MCF 10A (cell line): ENCODE measurements at regions of chr7 and their contacts with region 1.

Region 1: GRCh38 chr7:135801045-135801693 is 52.6 kb upstream of the FAM180A start:
- DNase-seq: peak; percentile 71
- H3K4me3 Mint-ChIP-seq: no peak overlapping the region
- H3K27ac Mint-ChIP-seq: no peak overlapping the region
- H3K4me1 Mint-ChIP-seq: peaks cover 15% of the 10 kb centered on the region
- H3K27me3 Mint-ChIP-seq: no peaks in the 10 kb centered on the region
- CTCF ChIP-seq: peak; percentile 76

Region 2: GRCh38 chr7:135620980-135621850 is 180.0 kb before region 1 on chr7:
- CTCF ChIA-PET with region 1: interaction called, 9 read pairs
- POLR2A ChIA-PET with region 1: no interaction called
- intact Hi-C with region 1: loop called (anchors 2 kb)
- DNase-seq: peak; percentile 76
- H3K4me3 Mint-ChIP-seq: no peak overlapping the region
- H3K27ac Mint-ChIP-seq: no peak overlapping the region
- H3K4me1 Mint-ChIP-seq: peaks cover 6% of the 10 kb centered on the region
- H3K27me3 Mint-ChIP-seq: no peaks in the 10 kb centered on the region
- CTCF ChIP-seq: peak; percentile 77

Region 3: DNA sequence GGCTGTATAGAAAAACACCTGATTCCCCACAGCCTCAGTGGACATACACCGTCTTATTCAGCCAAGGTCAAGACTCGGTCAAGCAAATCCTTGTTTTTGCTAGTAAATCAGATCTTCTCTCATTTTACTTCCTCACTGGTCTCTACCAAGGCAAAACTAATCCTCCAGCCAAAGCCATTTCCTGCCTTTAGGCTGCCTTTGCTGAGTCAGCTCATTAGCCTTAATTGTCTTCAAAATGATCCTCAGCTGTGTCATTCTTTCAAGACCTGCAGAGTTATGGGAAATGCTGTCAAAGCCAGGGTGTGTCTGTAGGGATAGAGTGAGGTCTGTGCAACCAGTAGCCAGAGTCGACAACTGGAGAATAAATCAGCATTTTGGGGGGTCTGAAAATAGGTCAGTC is 54.7 kb after region 1 on chr7:
- CTCF ChIA-PET with region 1: interaction called, 10 read pairs
- POLR2A ChIA-PET with region 1: no interaction called
- intact Hi-C with region 1: no loop called
- DNase-seq: peak; percentile 38
- H3K4me3 Mint-ChIP-seq: no peak overlapping the region
- H3K27ac Mint-ChIP-seq: no peak overlapping the region
- H3K4me1 Mint-ChIP-seq: no peaks in the 10 kb centered on the region
- H3K27me3 Mint-ChIP-seq: no peaks in the 10 kb centered on the region
- CTCF ChIP-seq: no peak

Region 4: DNA sequence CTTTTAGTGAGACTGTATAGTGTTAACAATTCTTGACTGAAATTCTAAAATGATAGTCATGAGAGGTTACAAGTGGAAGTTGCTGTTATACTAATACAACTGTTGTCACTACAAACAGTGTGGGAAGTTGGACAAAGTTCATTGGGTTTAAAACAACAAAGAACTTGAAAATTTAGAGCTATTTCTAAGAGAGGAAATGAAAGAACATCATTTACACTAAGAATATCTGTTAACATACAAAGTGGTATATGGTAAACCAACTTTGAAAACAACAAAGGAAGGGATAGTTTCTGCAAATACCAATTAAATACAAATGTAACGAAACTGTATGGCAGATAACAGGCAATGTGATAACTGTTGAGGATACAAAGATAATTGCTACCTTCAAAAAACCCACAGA is 164.4 kb after region 1 on chr7:
- CTCF ChIA-PET with region 1: no interaction called
- POLR2A ChIA-PET with region 1: no interaction called
- intact Hi-C with region 1: no loop called
- DNase-seq: no peak
- H3K4me3 Mint-ChIP-seq: no peak overlapping the region
- H3K27ac Mint-ChIP-seq: no peak overlapping the region
- H3K4me1 Mint-ChIP-seq: peaks cover 25% of the 10 kb centered on the region
- H3K27me3 Mint-ChIP-seq: no peaks in the 10 kb centered on the region
- CTCF ChIP-seq: no peak

Region 5: GRCh38 chr7:136009488-136010079 is 208.4 kb after region 1 on chr7:
- CTCF ChIA-PET with region 1: interaction called, 183 read pairs
- POLR2A ChIA-PET with region 1: interaction called, 4 read pairs
- intact Hi-C with region 1: loop called (anchors 1 kb)
- DNase-seq: peak; percentile 59
- H3K4me3 Mint-ChIP-seq: no peak overlapping the region
- H3K27ac Mint-ChIP-seq: no peak overlapping the region
- H3K4me1 Mint-ChIP-seq: no peaks in the 10 kb centered on the region
- H3K27me3 Mint-ChIP-seq: peaks cover 24% of the 10 kb centered on the region
- CTCF ChIP-seq: peak; percentile 48

Region 6: DNA sequence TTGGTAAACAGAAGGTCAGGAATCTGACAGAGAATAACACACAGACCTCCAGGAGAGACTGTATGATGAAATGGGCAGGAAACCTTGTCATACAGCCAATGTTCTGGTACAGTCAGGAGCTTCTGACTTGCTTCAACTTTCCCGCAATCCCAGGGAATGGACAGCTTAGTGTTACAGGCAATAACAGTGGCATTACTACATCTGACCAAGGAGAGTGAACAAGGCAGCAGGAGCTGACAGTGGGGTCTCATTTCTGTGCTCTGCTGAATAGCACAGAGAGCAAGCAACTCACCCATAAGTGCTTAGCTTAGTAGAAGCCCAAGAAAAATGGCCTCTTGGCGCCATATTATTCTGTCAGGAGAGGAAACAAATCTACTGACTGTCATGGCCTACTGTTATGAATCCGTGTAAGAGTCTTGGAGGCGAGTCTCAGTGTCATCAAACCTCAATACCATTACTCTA is 362.2 kb after region 1 on chr7:
- CTCF ChIA-PET with region 1: no interaction called
- POLR2A ChIA-PET with region 1: no interaction called
- intact Hi-C with region 1: no loop called
- DNase-seq: no peak
- H3K4me3 Mint-ChIP-seq: no peak overlapping the region
- H3K27ac Mint-ChIP-seq: no peak overlapping the region
- H3K4me1 Mint-ChIP-seq: no peaks in the 10 kb centered on the region
- H3K27me3 Mint-ChIP-seq: peaks cover 32% of the 10 kb centered on the region
- CTCF ChIP-seq: no peak

Region 7: GRCh38 chr7:136687693-136688322 is 886.6 kb after region 1 on chr7:
- CTCF ChIA-PET with region 1: no interaction called
- POLR2A ChIA-PET with region 1: no interaction called
- intact Hi-C with region 1: loop called (anchors 5 kb)
- DNase-seq: peak; percentile 46
- H3K4me3 Mint-ChIP-seq: no peak overlapping the region
- H3K27ac Mint-ChIP-seq: no peak overlapping the region
- H3K4me1 Mint-ChIP-seq: peaks cover 5% of the 10 kb centered on the region
- H3K27me3 Mint-ChIP-seq: peaks cover 62% of the 10 kb centered on the region
- CTCF ChIP-seq: peak; percentile 67

Region 8: DNA sequence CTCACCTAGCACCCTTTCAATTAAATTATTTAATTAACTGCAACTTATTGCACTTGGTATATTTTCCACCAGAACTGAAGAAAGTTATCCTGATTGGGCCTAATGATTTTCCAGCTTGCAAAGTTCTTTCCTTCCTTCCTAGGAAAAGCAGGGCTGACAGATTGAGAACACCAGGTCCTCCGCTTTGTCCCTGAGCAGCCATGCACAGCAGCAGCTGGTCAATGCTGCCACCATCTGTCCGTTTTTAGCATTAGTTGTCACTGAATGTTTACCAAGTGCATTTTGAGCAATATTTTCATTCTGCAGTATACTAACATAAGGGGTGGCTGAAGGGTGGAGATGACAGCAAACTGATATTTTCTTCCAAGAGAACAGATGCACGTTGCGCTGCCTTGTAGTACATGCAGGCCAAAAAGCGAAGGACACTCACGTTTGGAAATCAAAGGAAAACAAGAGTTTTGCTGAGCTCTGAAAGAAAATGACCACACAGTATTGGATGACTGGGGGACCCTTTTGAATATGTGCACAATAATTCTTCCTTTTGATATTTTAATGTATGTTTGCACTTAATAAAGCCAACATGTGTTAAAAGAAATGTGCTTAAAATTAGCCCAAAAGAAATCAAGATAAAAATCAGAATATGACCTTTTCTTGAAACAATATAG is 1791.2 kb after region 1 on chr7:
- CTCF ChIA-PET with region 1: interaction called, 3 read pairs
- POLR2A ChIA-PET with region 1: no interaction called
- intact Hi-C with region 1: loop called (anchors 10 kb)
- DNase-seq: peak; percentile 70
- H3K4me3 Mint-ChIP-seq: no peak overlapping the region
- H3K27ac Mint-ChIP-seq: no peak overlapping the region
- H3K4me1 Mint-ChIP-seq: no peaks in the 10 kb centered on the region
- H3K27me3 Mint-ChIP-seq: peaks cover 14% of the 10 kb centered on the region
- CTCF ChIP-seq: peak; percentile 91